ENCODE measurements at regions of chr11 and their contacts with region 1.

Region 1: GRCh38 chr11:42552786-42553185 is 759.0 kb upstream of the API5 start:
- DNase-seq: no peak
- H3K4me3 ChIP-seq: no peak overlapping the region
- H3K27ac ChIP-seq: no peak overlapping the region
- H3K4me1 ChIP-seq: no peaks in the 10 kb centered on the region
- H3K27me3 ChIP-seq: no peaks in the 10 kb centered on the region
- CTCF ChIP-seq: no peak
- POLR2A ChIP-seq: no peak

Region 2: GRCh38 chr11:42840176-42840829 is 287.5 kb after region 1 on chr11:
- intact Hi-C with region 1: loop called (anchors 5 kb)
- DNase-seq: no peak
- H3K4me3 ChIP-seq: no peak overlapping the region
- H3K27ac ChIP-seq: no peak overlapping the region
- H3K4me1 ChIP-seq: no peaks in the 10 kb centered on the region
- H3K27me3 ChIP-seq: no peaks in the 10 kb centered on the region
- CTCF ChIP-seq: no peak
- POLR2A ChIP-seq: no peak

Region 3: DNA sequence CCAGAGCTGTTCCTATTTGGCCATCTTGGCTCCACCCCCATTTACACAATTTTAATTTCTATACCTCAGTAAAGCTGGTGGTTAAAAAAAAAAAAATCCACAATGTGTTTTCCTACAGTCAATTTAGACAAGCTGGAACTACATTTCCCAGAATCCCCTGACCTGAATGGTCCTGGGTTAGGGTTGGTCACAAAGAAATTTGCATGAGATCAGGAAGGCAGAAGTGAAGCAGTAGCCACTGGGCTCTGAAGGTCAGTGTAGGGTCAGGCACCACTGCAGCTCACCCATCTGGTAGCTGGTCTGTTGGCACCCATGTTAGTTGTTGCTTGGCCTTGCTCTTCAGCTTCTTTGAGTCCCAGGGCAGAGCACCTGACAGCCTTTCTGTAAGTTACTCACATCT is 548.3 kb after region 1 on chr11:
- intact Hi-C with region 1: no loop called
- DNase-seq: no peak
- H3K4me3 ChIP-seq: no peak overlapping the region
- H3K27ac ChIP-seq: no peak overlapping the region
- H3K4me1 ChIP-seq: no peaks in the 10 kb centered on the region
- H3K27me3 ChIP-seq: no peaks in the 10 kb centered on the region
- CTCF ChIP-seq: no peak
- POLR2A ChIP-seq: no peak

Measured in vagina (tissue), 2 donors.